Spleen (tissue), 13 donors: ENCODE measurements at regions of chr14 and their contacts with region 1.

Region 1: GRCh38 chr14:20855652-20856291 is 35.4 kb upstream of the RNASE3 start:
- DNase-seq: peak; percentile 77
- H3K4me3 ChIP-seq: no peak overlapping the region
- H3K27ac ChIP-seq: no peak overlapping the region
- H3K4me1 ChIP-seq: peaks cover 0 to 18% (median 7%) of the 10 kb centered on the region in 6 donors
- H3K27me3 ChIP-seq: peaks cover 0 to 21% (median 0%) of the 10 kb centered on the region in 7 donors
- CTCF ChIP-seq: peak; percentile 59 to 94 (median 79)
- POLR2A ChIP-seq: no peak

Region 2: GRCh38 chr14:20697273-20698017 is 158.3 kb before region 1 on chr14:
- intact Hi-C with region 1: loop called (anchors 2 kb)
- DNase-seq: peak; percentile 82
- H3K4me3 ChIP-seq: no peak overlapping the region
- H3K27ac ChIP-seq: no peak overlapping the region
- H3K4me1 ChIP-seq: peaks cover 0 to 16% (median 6%) of the 10 kb centered on the region in 6 donors
- H3K27me3 ChIP-seq: no peaks in the 10 kb centered on the region
- CTCF ChIP-seq: peak; percentile 68 to 93 (median 85)
- POLR2A ChIP-seq: no peak

Region 3: DNA sequence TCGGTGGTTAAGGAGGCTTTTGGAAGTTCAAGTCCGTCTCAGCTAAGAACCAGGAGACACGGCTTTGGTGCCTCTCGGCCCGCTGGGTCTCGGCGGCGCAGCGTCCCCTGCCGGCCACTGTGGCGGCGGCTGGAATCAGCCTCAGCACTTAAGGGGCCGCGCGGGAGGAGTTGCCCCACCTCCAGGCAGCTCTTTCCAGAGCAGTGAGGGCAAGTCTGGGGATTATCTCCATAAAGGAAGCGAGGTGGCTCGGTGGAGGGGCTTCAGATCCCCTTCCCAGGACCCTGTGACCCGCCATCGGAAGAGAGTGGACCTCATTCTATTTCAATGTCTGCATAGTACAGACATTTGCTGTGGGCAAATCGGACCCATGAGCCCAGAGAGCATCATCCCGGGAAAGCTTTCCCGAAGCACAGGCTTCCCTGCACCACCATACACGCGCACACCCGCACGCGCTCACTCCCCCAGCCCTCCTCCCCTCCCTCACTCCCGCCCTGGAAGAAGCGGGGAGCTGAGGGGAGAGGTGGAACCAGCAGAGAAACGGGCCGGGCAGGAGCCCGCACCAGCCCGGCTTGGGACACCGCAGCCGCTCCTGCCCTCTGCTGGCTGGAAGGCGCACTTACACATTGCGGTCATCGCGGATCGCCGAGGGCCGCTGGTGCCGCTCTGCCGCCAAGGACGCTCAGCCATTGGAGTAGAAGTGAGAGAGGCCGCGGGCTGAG is 115.4 kb after region 1 on chr14:
- intact Hi-C with region 1: loop called (anchors 5 kb)
- DNase-seq: peak; percentile 96
- H3K4me3 ChIP-seq: peak overlapping the region; percentile 55 to 80 (median 60)
- H3K27ac ChIP-seq: peak overlapping the region; percentile 21 to 84 (median 78)
- H3K4me1 ChIP-seq: peaks cover 0 to 21% (median 17%) of the 10 kb centered on the region in 6 donors
- H3K27me3 ChIP-seq: peaks cover 0 to 14% (median 0%) of the 10 kb centered on the region in 7 donors
- CTCF ChIP-seq: peak; percentile 80 to 97 (median 94)
- POLR2A ChIP-seq: no peak